Activated CD4-positive, alpha-beta T cell treated with anti-CD3 and anti-CD28 coated beads for 36 hours (primary cell): ENCODE measurements at regions of chr12 and their contacts with region 1.

Region 1: GRCh38 chr12:111444925-111445725 is 39.4 kb downstream of the SH2B3 start:
- DNase-seq: peak; percentile 95
- ATAC-seq: peak; percentile 94
- H3K4me3 Mint-ChIP-seq: peak overlapping the region; percentile 17
- H3K27ac Mint-ChIP-seq: peak overlapping the region; percentile 70
- H3K4me1 Mint-ChIP-seq: peaks cover 63% of the 10 kb centered on the region
- H3K27me3 Mint-ChIP-seq: no peaks in the 10 kb centered on the region

Region 2: DNA sequence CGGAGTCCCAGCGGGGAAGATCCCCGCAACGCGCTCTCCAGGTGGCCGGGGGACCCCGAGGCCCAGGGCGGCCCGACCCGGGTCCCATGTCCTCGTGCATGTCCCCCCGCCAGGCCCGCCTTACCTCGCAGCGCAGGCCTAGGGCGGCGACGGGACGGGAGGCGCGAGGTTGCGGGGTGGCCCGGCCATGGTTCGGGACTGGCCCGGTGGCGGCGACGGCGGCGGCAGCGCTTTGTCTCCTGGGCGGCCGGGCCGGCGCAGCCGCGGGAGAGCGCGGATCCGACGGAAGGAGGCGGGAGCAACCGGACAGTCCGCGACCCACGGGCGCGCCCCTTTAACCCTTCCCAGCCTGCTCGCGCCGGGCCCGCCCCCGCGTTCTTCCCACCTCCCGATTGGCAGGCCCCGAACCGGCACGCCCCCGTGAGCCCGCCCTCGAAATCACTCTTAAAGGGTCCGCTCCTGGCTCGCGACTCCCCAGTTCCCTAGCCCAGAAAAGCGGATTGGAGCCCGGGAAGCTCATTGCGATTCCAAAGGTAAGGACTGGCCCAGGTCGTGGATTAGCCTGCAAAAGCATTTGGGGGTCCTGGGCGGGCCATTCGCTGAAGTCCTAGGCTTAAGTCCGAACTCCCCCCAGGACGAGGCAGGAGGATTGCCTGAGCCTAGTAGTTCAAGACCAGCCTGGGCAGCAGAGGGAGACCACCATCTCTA is 76.2 kb before region 1 on chr12 and contains the start of gene PHETA1:
- CTCF ChIA-PET with region 1: interaction called, 3 read pairs
- POLR2A ChIA-PET with region 1: no interaction called
- intact Hi-C with region 1: loop called in 1 of 2 experiments (anchors 2 kb)
- DNase-seq: peak; percentile 88
- ATAC-seq: peak; percentile 89
- H3K4me3 Mint-ChIP-seq: peak within 1 kb of the TSS; percentile 70
- H3K27ac Mint-ChIP-seq: no peak within 1 kb of the TSS
- H3K4me1 Mint-ChIP-seq: peaks cover 15% of the 10 kb centered on the region
- H3K27me3 Mint-ChIP-seq: peaks cover 3% of the 10 kb centered on the region
- total RNA-seq, gene PHETA1: 1.3 to 1.5 TPM

Region 3: GRCh38 chr12:111424793-111425251 is 20.3 kb before region 1 on chr12:
- CTCF ChIA-PET with region 1: interaction called, 26 read pairs
- POLR2A ChIA-PET with region 1: interaction called, 13 read pairs
- intact Hi-C with region 1: loop called (anchors 1 kb)
- DNase-seq: peak; percentile 42
- ATAC-seq: peak; percentile 24
- H3K4me3 Mint-ChIP-seq: no peak overlapping the region
- H3K27ac Mint-ChIP-seq: peak overlapping the region; percentile 44
- H3K4me1 Mint-ChIP-seq: peaks cover 61% of the 10 kb centered on the region
- H3K27me3 Mint-ChIP-seq: no peaks in the 10 kb centered on the region

Region 4: GRCh38 chr12:111434680-111435338 is 10.3 kb before region 1 on chr12:
- CTCF ChIA-PET with region 1: interaction called, 26 read pairs
- POLR2A ChIA-PET with region 1: interaction called, 17 read pairs
- intact Hi-C with region 1: loop called (anchors 1 kb)
- DNase-seq: peak; percentile 88
- ATAC-seq: peak; percentile 80
- H3K4me3 Mint-ChIP-seq: peak overlapping the region; percentile 35
- H3K27ac Mint-ChIP-seq: peak overlapping the region; percentile 81
- H3K4me1 Mint-ChIP-seq: peaks cover 89% of the 10 kb centered on the region
- H3K27me3 Mint-ChIP-seq: no peaks in the 10 kb centered on the region

Region 5: DNA sequence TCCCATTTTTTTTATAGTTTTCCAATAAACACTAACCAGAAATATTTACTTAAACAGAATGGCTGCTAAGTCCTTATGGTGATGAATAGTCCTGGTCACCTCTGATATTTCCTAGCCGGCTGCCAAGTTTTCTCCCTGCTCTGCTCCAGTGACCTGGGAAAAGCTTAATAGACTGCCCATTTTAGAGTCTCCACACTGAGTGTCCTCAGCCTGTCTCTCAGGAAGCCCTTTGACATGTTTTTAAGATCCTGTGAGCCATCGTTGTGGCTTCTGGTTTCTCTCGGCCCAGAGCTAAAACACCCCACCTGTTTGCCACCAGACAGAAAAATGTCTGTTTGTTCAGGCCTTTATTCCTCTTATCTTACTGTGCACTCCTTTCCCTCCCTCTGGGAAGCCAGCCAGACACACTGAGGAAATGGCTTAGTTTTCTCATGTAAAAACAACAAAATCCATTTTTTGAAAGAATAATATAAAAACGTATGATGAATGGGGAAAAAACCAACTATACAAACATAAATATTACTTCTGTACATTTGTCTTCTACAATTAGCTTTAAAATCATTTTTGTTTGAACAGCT is 296.2 kb after region 1 on chr12:
- CTCF ChIA-PET with region 1: no interaction called
- POLR2A ChIA-PET with region 1: no interaction called
- intact Hi-C with region 1: no loop called
- DNase-seq: no peak
- ATAC-seq: no peak
- H3K4me3 Mint-ChIP-seq: no peak overlapping the region
- H3K27ac Mint-ChIP-seq: no peak overlapping the region
- H3K4me1 Mint-ChIP-seq: no peaks in the 10 kb centered on the region
- H3K27me3 Mint-ChIP-seq: no peaks in the 10 kb centered on the region